ENCODE measurements at regions of chr14 and their contacts with region 1.

Region 1: GRCh38 chr14:68140111-68140741 is 320.6 kb downstream of the RAD51B start:
- DNase-seq: peak in 1 of 2 donors; percentile 72
- ATAC-seq: peak; percentile 25 to 77 (median 60)
- H3K4me3 ChIP-seq: no peak overlapping the region
- H3K27ac ChIP-seq: peak overlapping the region; percentile 6 to 78 (median 52)
- H3K4me1 ChIP-seq: peaks cover 15 to 74% (median 45%) of the 10 kb centered on the region in 9 donors
- H3K27me3 ChIP-seq: no peaks in the 10 kb centered on the region
- CTCF ChIP-seq: no peak

Region 2: DNA sequence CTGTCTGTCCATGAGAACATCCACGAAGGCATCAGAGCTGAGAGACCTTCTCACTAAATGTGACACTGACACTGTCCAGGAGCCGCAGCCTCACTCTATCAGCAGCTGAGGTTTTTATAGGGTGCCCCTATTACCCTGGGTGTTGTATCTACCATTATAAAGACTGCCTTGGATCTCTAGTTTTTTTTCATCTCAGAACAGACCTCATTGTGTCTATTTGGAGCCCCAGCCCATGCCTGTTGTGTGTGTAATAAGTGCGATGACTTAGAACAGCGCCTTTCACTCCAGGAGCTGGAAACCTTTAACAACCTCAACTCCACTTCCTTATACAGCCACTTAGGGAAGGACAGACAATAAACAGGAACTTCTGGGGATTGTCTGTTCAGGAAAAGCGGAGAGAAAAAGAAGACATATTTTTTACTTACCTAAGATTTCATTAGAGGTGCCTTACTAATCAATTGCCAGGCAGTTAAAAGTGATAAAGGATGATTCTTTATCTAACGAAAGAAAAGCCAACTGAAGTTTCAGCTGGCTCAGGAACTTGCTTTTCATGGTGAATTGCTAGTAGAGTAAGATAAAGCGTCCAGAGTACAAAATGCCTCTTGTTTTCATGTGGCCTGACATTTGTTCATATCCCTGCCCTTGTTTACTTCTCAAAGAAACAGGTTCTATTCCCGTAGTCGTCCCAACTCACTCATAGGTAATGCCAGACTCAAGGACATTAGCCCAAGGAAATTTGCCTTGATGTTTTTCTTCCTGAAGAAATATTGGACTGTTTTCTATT is 100.0 kb after region 1 on chr14:
- intact Hi-C with region 1: loop called in 4 of 10 experiments (anchors 2 to 5 kb)
- DNase-seq: no peak
- ATAC-seq: peak in 7 of 8 donors; percentile 16 to 68 (median 46)
- H3K4me3 ChIP-seq: no peak overlapping the region
- H3K27ac ChIP-seq: peak overlapping the region in 8 of 10 donors; percentile 13 to 72 (median 49)
- H3K4me1 ChIP-seq: peaks cover 8 to 49% (median 34%) of the 10 kb centered on the region in 9 donors
- H3K27me3 ChIP-seq: no peaks in the 10 kb centered on the region
- CTCF ChIP-seq: no peak